ENCODE measurements at regions of chr3 and their contacts with region 1.

Region 1: GRCh38 chr3:10026084-10026890 is at the start of gene FANCD2:
- DNase-seq: peak; percentile 90
- H3K4me3 ChIP-seq: peak within 1 kb of the TSS; percentile 98
- H3K27ac ChIP-seq: peak within 1 kb of the TSS; percentile 82
- H3K4me1 ChIP-seq: peaks cover 22% of the 10 kb centered on the region
- CTCF ChIP-seq: no peak
- total RNA-seq, gene FANCD2: 112 and 116 TPM in 2 replicates

Region 2: DNA sequence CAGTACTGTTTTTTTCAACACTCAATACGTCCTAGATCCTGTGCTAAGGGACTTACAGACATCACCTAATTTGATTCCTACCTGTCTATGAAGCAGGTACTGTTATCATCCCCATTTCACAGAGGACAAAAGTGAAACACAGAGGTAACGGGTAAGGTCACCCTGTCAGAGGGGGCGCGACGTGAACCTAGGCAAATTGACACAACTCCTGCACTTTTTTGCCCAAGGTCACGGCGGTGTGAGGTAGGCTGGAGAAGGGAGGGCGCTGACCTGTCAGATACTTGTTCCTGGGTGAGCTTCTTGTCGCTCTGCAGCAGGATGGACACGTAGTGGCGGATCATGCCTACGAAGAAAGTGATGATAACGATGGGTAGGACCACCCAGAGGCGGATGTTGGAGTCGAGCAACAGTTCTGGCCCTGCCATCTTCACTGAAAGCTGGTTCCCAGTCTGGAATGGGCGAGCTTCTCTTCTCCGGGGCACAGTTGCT is 40.0 kb before region 1 on chr3:
- CTCF ChIA-PET with region 1: no interaction called
- POLR2A ChIA-PET with region 1: interaction called, 4 read pairs
- intact Hi-C with region 1: loop called (anchors 1 kb)
- DNase-seq: no peak
- H3K4me3 ChIP-seq: peak overlapping the region; percentile 96
- H3K27ac ChIP-seq: peak overlapping the region; percentile 81
- H3K4me1 ChIP-seq: peaks cover 19% of the 10 kb centered on the region
- CTCF ChIP-seq: no peak